Activated naive CD4-positive, alpha-beta T cell treated with anti-CD3 and anti-CD28 coated beads for 36 hours (primary cell): ENCODE measurements at regions of chr14 and their contacts with region 1.

Region 1: GRCh38 chr14:77376771-77377501 is at the starts of genes SAMD15 and TMED8:
- DNase-seq: peak; percentile 84
- H3K4me3 Mint-ChIP-seq: peak within 1 kb of the TSS; percentile 90
- H3K27ac Mint-ChIP-seq: peak within 1 kb of the TSS; percentile 80
- H3K4me1 Mint-ChIP-seq: peaks cover 38% of the 10 kb centered on the region
- H3K27me3 Mint-ChIP-seq: no peaks in the 10 kb centered on the region
- total RNA-seq, gene SAMD15: 0.10 TPM in 1 of 2 experiments, not detected in the other
- total RNA-seq, gene TMED8: 21.5 to 21.7 TPM

Region 2: DNA sequence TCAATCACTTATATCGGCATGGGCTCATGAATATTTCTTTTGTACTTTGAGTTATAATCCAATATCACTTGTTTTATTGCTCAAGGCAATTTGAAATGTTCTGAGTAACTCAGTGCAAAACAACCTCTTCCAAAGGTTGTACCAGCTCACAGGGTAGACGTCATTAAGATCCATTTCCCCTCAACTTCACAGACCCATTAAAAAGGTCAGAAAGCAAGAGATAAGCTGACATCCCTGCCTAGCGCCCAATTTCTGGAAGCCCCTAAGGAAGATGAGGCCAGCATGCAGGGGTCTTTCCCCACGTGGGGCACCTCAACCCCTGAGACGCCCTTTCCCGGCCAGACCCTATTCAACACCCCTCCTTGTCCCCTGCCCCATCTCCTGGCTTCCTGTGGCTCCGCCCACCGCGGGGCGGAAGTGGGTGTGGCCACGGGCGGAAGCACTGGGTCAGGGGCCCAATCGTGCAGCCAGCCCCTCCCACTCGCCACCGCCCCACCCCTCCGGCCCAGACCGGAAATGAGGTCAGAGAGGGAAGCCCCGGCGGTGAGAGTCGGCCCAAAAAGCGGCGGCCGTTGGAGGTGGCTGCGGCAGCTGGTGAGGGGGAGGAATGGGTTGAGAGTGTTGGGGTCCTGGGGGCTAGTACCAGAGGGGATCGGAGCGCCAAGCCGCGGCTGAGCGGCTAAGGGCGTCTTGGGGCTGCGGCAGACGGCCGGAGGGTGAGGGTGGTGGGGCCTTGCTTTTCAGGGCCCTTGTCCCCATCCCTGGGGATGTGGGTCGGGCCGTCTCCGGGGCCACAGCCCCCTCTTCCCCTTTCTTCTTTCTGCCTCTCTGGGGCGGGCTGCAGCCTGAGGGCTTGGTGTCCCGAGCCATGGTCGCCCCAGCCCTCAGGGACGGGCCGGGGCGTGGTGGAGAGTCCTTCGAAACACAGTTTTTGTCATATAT is 1225.3 kb before region 1 on chr14 and contains the start of gene GPATCH2L:
- CTCF ChIA-PET with region 1: no interaction called
- intact Hi-C with region 1: loop called (anchors 5 kb)
- DNase-seq: peak; percentile 99
- H3K4me3 Mint-ChIP-seq: peak within 1 kb of the TSS; percentile 98
- H3K27ac Mint-ChIP-seq: peak within 1 kb of the TSS; percentile 97
- H3K4me1 Mint-ChIP-seq: peaks cover 48% of the 10 kb centered on the region
- H3K27me3 Mint-ChIP-seq: no peaks in the 10 kb centered on the region
- total RNA-seq, gene GPATCH2L: 40.0 to 43.4 TPM

Region 3: GRCh38 chr14:77359626-77360025 is 17.3 kb before region 1 on chr14:
- CTCF ChIA-PET with region 1: interaction called, 4 read pairs
- intact Hi-C with region 1: loop called (anchors 2 kb)
- DNase-seq: no peak
- H3K4me3 Mint-ChIP-seq: no peak overlapping the region
- H3K27ac Mint-ChIP-seq: no peak overlapping the region
- H3K4me1 Mint-ChIP-seq: peaks cover 9% of the 10 kb centered on the region
- H3K27me3 Mint-ChIP-seq: no peaks in the 10 kb centered on the region

Region 4: GRCh38 chr14:77760381-77761246 is 383.7 kb after region 1 on chr14 and contains the start of gene SNW1:
- CTCF ChIA-PET with region 1: no interaction called
- intact Hi-C with region 1: loop called (anchors 2 kb)
- DNase-seq: peak; percentile 95
- H3K4me3 Mint-ChIP-seq: peak within 1 kb of the TSS; percentile 94
- H3K27ac Mint-ChIP-seq: peak within 1 kb of the TSS; percentile 95
- H3K4me1 Mint-ChIP-seq: peaks cover 32% of the 10 kb centered on the region
- H3K27me3 Mint-ChIP-seq: no peaks in the 10 kb centered on the region
- total RNA-seq, gene SNW1: 117 to 129 TPM

Region 5: GRCh38 chr14:77825895-77826519 is 449.1 kb after region 1 on chr14:
- CTCF ChIA-PET with region 1: no interaction called
- intact Hi-C with region 1: no loop called
- DNase-seq: no peak
- H3K4me3 Mint-ChIP-seq: no peak overlapping the region
- H3K27ac Mint-ChIP-seq: no peak overlapping the region
- H3K4me1 Mint-ChIP-seq: no peaks in the 10 kb centered on the region
- H3K27me3 Mint-ChIP-seq: no peaks in the 10 kb centered on the region